Tibial artery (tissue), 4 donors: ENCODE measurements at regions of chr12 and their contacts with region 1.

Region 1: DNA sequence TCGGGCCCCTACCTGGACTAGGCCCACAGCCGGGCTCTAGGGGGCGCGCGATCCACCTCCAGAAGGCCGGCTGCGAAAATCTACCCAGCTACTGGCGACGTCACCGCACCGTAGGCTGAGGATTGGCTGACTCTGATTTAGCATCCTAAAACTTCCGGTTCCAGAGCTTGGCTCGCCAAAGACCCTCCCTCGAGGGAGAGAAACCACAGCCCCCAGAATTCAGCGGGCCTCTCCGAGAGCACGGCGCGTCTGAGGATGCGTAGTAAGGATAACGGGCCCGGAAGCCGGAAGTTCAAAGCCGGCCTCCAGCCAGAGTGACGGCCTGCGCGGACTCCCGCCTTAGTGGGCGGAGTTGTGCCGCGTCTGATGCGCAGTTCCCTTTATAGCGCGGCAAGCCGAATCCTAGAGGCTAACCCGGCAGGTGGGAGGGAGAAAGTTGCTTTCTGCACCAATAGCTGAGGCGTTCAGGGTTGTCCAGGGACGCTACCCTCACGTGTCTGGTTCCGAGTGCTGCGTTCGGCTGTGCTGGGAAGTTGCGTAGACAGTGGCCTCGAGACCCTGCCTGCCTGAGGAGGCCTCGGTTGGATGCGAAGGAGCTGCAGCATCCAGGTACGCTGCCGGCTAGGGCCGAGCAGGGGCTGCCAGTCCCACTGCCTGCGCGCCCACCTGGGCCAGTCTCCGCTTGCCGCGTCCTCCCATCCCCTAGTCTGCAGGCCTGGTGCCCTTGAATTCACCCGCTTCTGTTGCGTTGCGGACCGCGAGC is at the start of gene COX14:
- DNase-seq: peak; percentile 99 to 100
- H3K4me3 ChIP-seq: peak within 1 kb of the TSS; percentile 75 to 99
- H3K27ac ChIP-seq: peak within 1 kb of the TSS; percentile 97 to 99
- H3K4me1 ChIP-seq: peaks cover 0 to 61% (median 47%) of the 10 kb centered on the region in 4 donors
- H3K27me3 ChIP-seq: no peaks in the 10 kb centered on the region
- CTCF ChIP-seq: peak; percentile 83 to 89

Region 2: GRCh38 chr12:50006789-50007436 is 105.0 kb before region 1 on chr12:
- intact Hi-C with region 1: no loop called
- DNase-seq: no peak
- H3K4me3 ChIP-seq: no peak overlapping the region
- H3K27ac ChIP-seq: no peak overlapping the region
- H3K4me1 ChIP-seq: no peaks in the 10 kb centered on the region
- H3K27me3 ChIP-seq: no peaks in the 10 kb centered on the region
- CTCF ChIP-seq: no peak

Region 3: GRCh38 chr12:50070314-50071060 is 41.4 kb before region 1 on chr12:
- intact Hi-C with region 1: no loop called
- DNase-seq: peak; percentile 69 to 85
- H3K4me3 ChIP-seq: no peak overlapping the region
- H3K27ac ChIP-seq: no peak overlapping the region
- H3K4me1 ChIP-seq: peaks cover 0 to 19% (median 6%) of the 10 kb centered on the region in 4 donors
- H3K27me3 ChIP-seq: no peaks in the 10 kb centered on the region
- CTCF ChIP-seq: peak; percentile 85 to 86

Region 4: GRCh38 chr12:50084775-50085614 is 26.9 kb before region 1 on chr12 and contains the start of gene SMARCD1:
- intact Hi-C with region 1: loop called (anchors 2 kb)
- DNase-seq: peak; percentile 95 to 96
- H3K4me3 ChIP-seq: peak within 1 kb of the TSS; percentile 73 to 87
- H3K27ac ChIP-seq: peak within 1 kb of the TSS; percentile 91 to 95
- H3K4me1 ChIP-seq: peaks cover 0 to 25% (median 16%) of the 10 kb centered on the region in 4 donors
- H3K27me3 ChIP-seq: no peaks in the 10 kb centered on the region
- CTCF ChIP-seq: peak in 1 of 2 experiments; percentile 19

Region 5: GRCh38 chr12:50151047-50151687 is 39.3 kb after region 1 on chr12:
- intact Hi-C with region 1: no loop called
- DNase-seq: no peak
- H3K4me3 ChIP-seq: no peak overlapping the region
- H3K27ac ChIP-seq: no peak overlapping the region
- H3K4me1 ChIP-seq: peaks cover 0 to 9% (median 0%) of the 10 kb centered on the region in 4 donors
- H3K27me3 ChIP-seq: no peaks in the 10 kb centered on the region
- CTCF ChIP-seq: no peak

Region 6: GRCh38 chr12:50167041-50167828 is 55.4 kb after region 1 on chr12 and contains the start of gene CERS5:
- intact Hi-C with region 1: loop called (anchors 5 kb)
- DNase-seq: peak; percentile 99 to 100
- H3K4me3 ChIP-seq: peak within 1 kb of the TSS; percentile 92 to 98
- H3K27ac ChIP-seq: peak within 1 kb of the TSS; percentile 96 to 98
- H3K4me1 ChIP-seq: peaks cover 0 to 36% (median 12%) of the 10 kb centered on the region in 4 donors
- H3K27me3 ChIP-seq: no peaks in the 10 kb centered on the region
- CTCF ChIP-seq: peak in 1 of 2 experiments; percentile 45